Activated CD4-positive, alpha-beta memory T cell treated with anti-CD3 and anti-CD28 coated beads, Interleukin-2, amount 10 ng/mL, durations not matched to agents 7 days and 5 days (primary cell): ENCODE measurements at regions of chr10 and their contacts with region 1.

Region 1: GRCh38 chr10:50417886-50418830 is 166.8 kb upstream of the ASAH2 start:
- DNase-seq: peak; percentile 72
- H3K4me3 Mint-ChIP-seq: peak overlapping the region; percentile 89
- H3K27ac Mint-ChIP-seq: peak overlapping the region; percentile 93
- H3K4me1 Mint-ChIP-seq: peaks cover 70% of the 10 kb centered on the region
- H3K27me3 Mint-ChIP-seq: no peaks in the 10 kb centered on the region

Region 2: DNA sequence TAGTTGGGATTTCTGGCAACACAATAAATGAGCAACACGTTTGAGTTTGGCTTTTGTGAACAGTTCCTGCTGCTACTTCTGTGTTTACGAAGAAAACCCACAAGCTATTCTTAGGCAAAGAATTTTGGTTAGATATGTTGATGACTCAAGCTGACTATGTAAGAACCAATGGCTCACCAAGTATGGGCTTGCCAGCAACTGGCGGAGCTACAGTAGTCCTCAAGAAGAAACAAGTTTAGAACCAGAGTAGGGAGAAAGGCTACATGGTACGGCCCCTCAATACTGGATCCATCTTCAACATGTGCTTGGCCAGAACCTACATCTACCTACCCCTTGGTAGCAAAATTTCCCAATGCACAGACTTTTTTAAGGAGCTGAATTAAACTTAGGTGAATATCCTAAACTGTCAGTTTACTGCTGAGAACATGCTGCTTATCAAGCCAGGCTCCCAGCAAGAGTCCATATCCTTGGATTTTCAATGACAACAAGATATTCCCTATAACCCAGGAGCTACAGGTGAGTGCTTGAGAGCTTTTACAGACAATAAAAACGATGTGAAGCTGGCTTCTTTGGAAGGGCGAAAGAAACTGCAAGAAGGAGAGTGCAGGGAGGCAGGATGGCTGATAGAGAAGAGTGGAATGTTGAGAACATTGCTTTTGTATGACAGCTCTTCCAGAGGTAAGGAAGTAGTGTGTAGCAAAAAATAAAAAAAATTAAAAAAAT is 92.5 kb before region 1 on chr10:
- CTCF ChIA-PET with region 1: no interaction called
- POLR2A ChIA-PET with region 1: interaction called, 13 read pairs
- DNase-seq: peak; percentile 47
- H3K4me3 Mint-ChIP-seq: no peak overlapping the region
- H3K27ac Mint-ChIP-seq: peak overlapping the region; percentile 46
- H3K4me1 Mint-ChIP-seq: peaks cover 66% of the 10 kb centered on the region
- H3K27me3 Mint-ChIP-seq: no peaks in the 10 kb centered on the region

Region 3: DNA sequence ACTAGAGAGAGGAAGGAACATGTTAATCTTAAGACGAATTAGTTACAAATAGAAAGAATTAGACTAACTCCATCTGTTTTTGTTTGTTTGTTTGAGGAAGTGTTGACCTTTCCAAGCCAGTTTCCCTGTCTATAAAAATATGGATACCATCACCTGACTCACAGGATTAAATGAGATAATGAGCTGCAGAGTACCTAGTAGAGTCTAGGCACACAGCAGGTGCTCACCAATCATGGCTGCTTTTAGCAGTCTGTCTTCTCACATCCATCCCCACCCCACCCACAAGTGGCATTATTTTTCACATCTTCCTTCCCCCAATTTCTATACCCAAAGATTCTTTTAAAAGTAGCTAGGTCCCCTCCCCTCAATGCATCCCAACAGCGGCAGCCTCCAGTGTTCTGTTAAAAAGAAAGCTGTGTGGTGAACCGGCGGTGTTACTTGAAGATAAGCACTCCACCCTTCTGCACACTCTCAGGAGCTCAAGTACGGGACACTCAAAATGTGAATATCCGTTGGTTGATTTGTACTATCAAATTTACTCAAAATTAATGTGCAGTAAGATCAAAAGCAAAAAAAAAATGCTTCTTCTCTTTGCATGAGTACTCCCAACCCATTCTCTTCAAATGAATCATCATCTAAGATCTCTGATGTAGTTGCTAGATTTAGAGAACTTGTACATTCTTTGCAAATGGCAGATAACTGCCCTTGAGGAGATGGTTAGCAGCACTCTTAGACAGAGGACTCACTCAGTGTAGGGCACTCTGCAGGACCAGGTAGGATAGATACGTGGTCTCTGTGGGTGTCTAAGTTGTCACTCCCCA is 21.5 kb before region 1 on chr10:
- CTCF ChIA-PET with region 1: interaction called, 13 read pairs
- POLR2A ChIA-PET with region 1: interaction called, 52 read pairs
- DNase-seq: peak; percentile 35
- H3K4me3 Mint-ChIP-seq: peak overlapping the region; percentile 49
- H3K27ac Mint-ChIP-seq: peak overlapping the region; percentile 85
- H3K4me1 Mint-ChIP-seq: peaks cover 59% of the 10 kb centered on the region
- H3K27me3 Mint-ChIP-seq: no peaks in the 10 kb centered on the region

Region 4: GRCh38 chr10:50508315-50509051 is 90.3 kb after region 1 on chr10:
- CTCF ChIA-PET with region 1: interaction called, 4 read pairs
- POLR2A ChIA-PET with region 1: interaction called, 30 read pairs
- DNase-seq: peak; percentile 71
- H3K4me3 Mint-ChIP-seq: no peak overlapping the region
- H3K27ac Mint-ChIP-seq: peak overlapping the region; percentile 37
- H3K4me1 Mint-ChIP-seq: peaks cover 75% of the 10 kb centered on the region
- H3K27me3 Mint-ChIP-seq: peaks cover 12% of the 10 kb centered on the region

Region 5: DNA sequence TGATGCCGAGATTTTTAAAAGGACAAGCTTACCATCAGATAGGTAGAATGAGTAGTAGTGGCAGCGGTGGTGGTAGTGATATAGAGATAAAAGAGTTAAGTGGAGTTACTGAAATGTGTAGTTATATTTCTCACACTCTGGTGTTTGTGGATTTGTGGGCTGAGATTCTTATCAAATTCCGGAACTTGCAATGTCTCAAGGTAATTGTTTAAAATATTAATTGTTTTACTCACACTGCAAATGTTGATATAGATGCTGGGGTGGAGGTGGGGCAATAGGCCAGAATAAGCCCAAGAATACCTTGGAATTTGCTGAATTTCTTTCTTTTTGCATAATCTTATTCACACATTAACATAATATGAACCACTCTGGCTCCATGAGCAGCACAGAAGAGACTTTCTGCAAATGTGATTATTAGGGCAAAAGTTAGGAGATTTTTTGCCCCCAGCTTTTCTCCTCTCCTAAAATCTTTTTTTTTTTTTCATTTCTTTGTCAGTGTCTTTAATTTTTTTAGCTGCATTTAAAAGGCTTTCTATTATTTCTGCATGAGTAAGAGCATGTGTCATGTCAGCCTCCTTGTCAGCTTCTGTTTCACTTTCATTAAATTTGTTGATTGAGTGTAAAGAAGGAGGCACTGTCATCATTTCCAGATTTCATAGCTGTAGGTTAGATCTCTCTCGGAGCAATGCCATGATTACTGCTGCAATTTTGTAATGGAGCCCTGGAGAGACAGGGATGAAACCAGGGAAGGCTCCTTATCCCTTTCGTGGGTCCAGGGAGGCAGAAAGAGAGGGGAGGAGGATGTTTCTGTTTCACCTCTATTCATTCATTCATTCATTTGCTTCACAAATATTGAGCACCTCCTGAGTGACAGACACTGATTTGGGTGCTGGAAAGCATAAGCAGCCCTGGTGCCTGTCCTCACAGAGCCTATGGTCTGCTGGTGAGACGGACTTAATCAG is 218.7 kb after region 1 on chr10:
- CTCF ChIA-PET with region 1: interaction called, 5 read pairs
- POLR2A ChIA-PET with region 1: interaction called, 16 read pairs
- DNase-seq: peak; percentile 55
- H3K4me3 Mint-ChIP-seq: peak overlapping the region; percentile 45
- H3K27ac Mint-ChIP-seq: peak overlapping the region; percentile 34
- H3K4me1 Mint-ChIP-seq: peaks cover 34% of the 10 kb centered on the region
- H3K27me3 Mint-ChIP-seq: peaks cover 63% of the 10 kb centered on the region